PC-3 (cell line): ENCODE measurements at regions of chr1 and their contacts with region 1.

Region 1: GRCh38 chr1:100883963-100884362 is 10.7 kb downstream of the EXTL2 start:
- DNase-seq: peak; percentile 77
- ATAC-seq: peak; percentile 99
- H3K4me3 ChIP-seq: peak overlapping the region; percentile 33; the same call in 1 of the 2 replicates
- H3K27ac ChIP-seq: no peak overlapping the region
- H3K4me1 ChIP-seq: peaks cover 14% of the 10 kb centered on the region
- H3K27me3 ChIP-seq: no peaks in the 10 kb centered on the region
- CTCF ChIP-seq: peak; percentile 56

Region 2: GRCh38 chr1:100132566-100133477 is 751.1 kb before region 1 on chr1 and contains the starts of genes SASS6 and TRMT13:
- CTCF ChIA-PET with region 1: no interaction called
- POLR2A ChIA-PET with region 1: no interaction called
- intact Hi-C with region 1: no loop called
- DNase-seq: peak; percentile 97
- ATAC-seq: peak; percentile 94
- H3K4me3 ChIP-seq: peak within 1 kb of the TSS; percentile 77
- H3K27ac ChIP-seq: peak within 1 kb of the TSS; percentile 59
- H3K4me1 ChIP-seq: peaks cover 29% of the 10 kb centered on the region
- H3K27me3 ChIP-seq: no peaks in the 10 kb centered on the region
- CTCF ChIP-seq: no peak
- total RNA-seq, gene SASS6: 9.0 and 9.2 TPM in 2 replicates
- total RNA-seq, gene TRMT13: 6.7 and 9.4 TPM in 2 replicates

Region 3: GRCh38 chr1:100894622-100895539 is 10.9 kb after region 1 on chr1 and contains the start of gene EXTL2:
- CTCF ChIA-PET with region 1: no interaction called
- POLR2A ChIA-PET with region 1: interaction called, 5 read pairs
- intact Hi-C with region 1: loop called (anchors 1 kb)
- DNase-seq: peak; percentile 91
- ATAC-seq: peak; percentile 52
- H3K4me3 ChIP-seq: peak within 1 kb of the TSS; percentile 92
- H3K27ac ChIP-seq: peak within 1 kb of the TSS; percentile 98
- H3K4me1 ChIP-seq: peaks cover 23% of the 10 kb centered on the region
- H3K27me3 ChIP-seq: no peaks in the 10 kb centered on the region
- CTCF ChIP-seq: no peak
- total RNA-seq, gene EXTL2: 6.4 and 7.5 TPM in 2 replicates